Sciatic nerve (tissue), 2 donors: ENCODE measurements at regions of chr16 and their contacts with region 1.

Region 1: GRCh38 chr16:84307209-84307954 is 12.7 kb downstream of the WFDC1 start:
- DNase-seq: no peak
- ATAC-seq: no peak

Region 2: GRCh38 chr16:84277237-84277823 is 30.1 kb before region 1 on chr16:
- intact Hi-C with region 1: loop called (anchors 2 kb)
- DNase-seq: peak; percentile 87
- ATAC-seq: peak; percentile 78

Region 3: GRCh38 chr16:84323621-84324020 is 16.2 kb after region 1 on chr16:
- intact Hi-C with region 1: no loop called
- DNase-seq: no peak
- ATAC-seq: no peak

Region 4: GRCh38 chr16:84396537-84397008 is 89.2 kb after region 1 on chr16:
- intact Hi-C with region 1: no loop called
- DNase-seq: no peak
- ATAC-seq: no peak

Region 5: GRCh38 chr16:84423416-84423837 is 116.0 kb after region 1 on chr16:
- intact Hi-C with region 1: no loop called
- DNase-seq: no peak
- ATAC-seq: no peak